GM12878 (cell line): ENCODE measurements at regions of chr3 and their contacts with region 1.

Region 1: GRCh38 chr3:196073188-196073838 is 8.6 kb downstream of the TFRC start:
- DNase-seq: peak; percentile 50
- ATAC-seq: peak; percentile 94
- H3K4me3 ChIP-seq: no peak overlapping the region
- H3K27ac ChIP-seq: no peak overlapping the region
- H3K4me1 ChIP-seq: peaks cover 14% of the 10 kb centered on the region; the same call in 1 of the 2 replicates
- H3K27me3 ChIP-seq: no peaks in the 10 kb centered on the region
- CTCF ChIP-seq: peak; percentile 72 to 81 (median 76)
- EP300 ChIP-seq: no peak
- POLR2A ChIP-seq: no peak
- RAD21 ChIP-seq: peak; percentile 95

Region 2: DNA sequence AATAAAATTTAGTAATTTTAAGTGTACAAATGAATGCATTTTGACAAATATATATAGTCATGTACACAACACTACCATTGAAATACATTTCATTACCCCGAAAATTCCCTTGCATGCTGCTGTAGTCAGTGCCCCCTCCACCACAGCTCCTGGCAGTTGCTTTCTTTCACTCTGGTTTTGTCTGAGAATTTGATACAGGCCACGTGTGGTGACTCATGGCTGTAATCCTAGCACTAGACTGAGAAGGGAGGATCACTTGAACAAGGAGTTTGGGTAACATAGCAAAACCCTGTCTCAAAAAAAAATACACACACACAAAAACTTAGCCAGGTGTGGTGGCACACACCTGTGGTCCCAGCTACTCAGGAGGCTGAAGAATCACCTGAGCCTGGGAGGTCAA is 56.8 kb before region 1 on chr3:
- CTCF ChIA-PET with region 1: interaction called, 25 read pairs
- POLR2A ChIA-PET with region 1: no interaction called
- RAD21 ChIA-PET with region 1: interaction called, 8 read pairs
- SMC1A ChIA-PET with region 1: interaction called, 5 read pairs
- in situ Hi-C with region 1: no loop called
- intact Hi-C with region 1: loop called (anchors 5 kb)
- DNase-seq: no peak
- ATAC-seq: no peak
- H3K4me3 ChIP-seq: no peak overlapping the region
- H3K27ac ChIP-seq: no peak overlapping the region
- H3K4me1 ChIP-seq: no peaks in the 10 kb centered on the region
- H3K27me3 ChIP-seq: no peaks in the 10 kb centered on the region
- CTCF ChIP-seq: no peak
- EP300 ChIP-seq: no peak
- POLR2A ChIP-seq: no peak
- RAD21 ChIP-seq: no peak

Region 3: GRCh38 chr3:196055683-196056270 is 17.5 kb before region 1 on chr3:
- CTCF ChIA-PET with region 1: interaction called, 31 read pairs
- POLR2A ChIA-PET with region 1: interaction called, 12 read pairs
- RAD21 ChIA-PET with region 1: no interaction called
- SMC1A ChIA-PET with region 1: interaction called, 18 read pairs
- in situ Hi-C with region 1: no loop called
- intact Hi-C with region 1: no loop called
- DNase-seq: no peak
- ATAC-seq: no peak; the same call in 1 of the 3 replicates
- H3K4me3 ChIP-seq: no peak overlapping the region
- H3K27ac ChIP-seq: no peak overlapping the region
- H3K4me1 ChIP-seq: no peaks in the 10 kb centered on the region
- H3K27me3 ChIP-seq: no peaks in the 10 kb centered on the region
- CTCF ChIP-seq: no peak
- EP300 ChIP-seq: no peak
- POLR2A ChIP-seq: no peak
- RAD21 ChIP-seq: no peak

Region 4: DNA sequence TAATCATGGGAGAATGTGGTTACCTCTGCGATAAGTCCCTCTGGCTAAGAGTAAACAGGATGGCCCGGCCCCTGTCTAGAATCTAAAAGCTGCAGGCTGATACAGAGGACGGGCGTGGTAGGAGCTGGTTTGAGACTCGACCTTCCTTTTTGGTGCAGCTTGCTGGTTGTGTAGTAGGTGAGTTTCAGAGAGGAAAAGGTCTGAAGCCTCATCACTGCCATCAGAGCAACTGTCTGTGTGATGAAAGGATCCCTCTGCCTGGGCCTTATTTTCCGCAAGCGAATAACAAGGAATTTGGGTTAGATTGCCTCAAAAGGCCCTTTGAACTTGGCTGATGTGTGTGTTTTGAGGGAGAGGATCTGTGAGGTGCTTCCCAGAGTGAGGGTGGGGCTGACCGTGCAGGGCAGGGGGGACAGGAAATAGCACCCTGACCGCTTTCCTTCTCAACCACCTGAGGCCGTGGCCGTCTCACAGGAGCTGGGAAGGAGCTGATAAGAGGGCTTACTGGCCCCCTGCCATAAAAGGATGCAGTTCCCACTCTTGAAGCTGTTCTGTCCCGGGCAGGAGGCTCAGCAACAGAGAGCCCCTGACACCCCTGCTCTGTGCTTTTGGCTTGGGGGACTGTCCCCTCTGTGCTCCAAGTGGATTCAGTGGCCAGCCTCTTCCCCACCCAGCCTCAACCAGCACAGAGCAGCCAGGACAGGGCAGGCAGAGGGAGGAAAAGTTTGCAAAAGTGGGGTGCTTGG is 54.2 kb after region 1 on chr3:
- CTCF ChIA-PET with region 1: interaction called, 8 read pairs
- POLR2A ChIA-PET with region 1: no interaction called
- RAD21 ChIA-PET with region 1: interaction called, 15 read pairs
- SMC1A ChIA-PET with region 1: interaction called, 11 read pairs
- in situ Hi-C with region 1: no loop called
- intact Hi-C with region 1: no loop called
- DNase-seq: no peak
- ATAC-seq: peak; percentile 80
- H3K4me3 ChIP-seq: no peak overlapping the region
- H3K27ac ChIP-seq: peak overlapping the region; percentile 27
- H3K4me1 ChIP-seq: peaks cover 25% of the 10 kb centered on the region
- H3K27me3 ChIP-seq: no peaks in the 10 kb centered on the region
- CTCF ChIP-seq: no peak
- EP300 ChIP-seq: no peak
- POLR2A ChIP-seq: no peak
- RAD21 ChIP-seq: no peak

Region 5: DNA sequence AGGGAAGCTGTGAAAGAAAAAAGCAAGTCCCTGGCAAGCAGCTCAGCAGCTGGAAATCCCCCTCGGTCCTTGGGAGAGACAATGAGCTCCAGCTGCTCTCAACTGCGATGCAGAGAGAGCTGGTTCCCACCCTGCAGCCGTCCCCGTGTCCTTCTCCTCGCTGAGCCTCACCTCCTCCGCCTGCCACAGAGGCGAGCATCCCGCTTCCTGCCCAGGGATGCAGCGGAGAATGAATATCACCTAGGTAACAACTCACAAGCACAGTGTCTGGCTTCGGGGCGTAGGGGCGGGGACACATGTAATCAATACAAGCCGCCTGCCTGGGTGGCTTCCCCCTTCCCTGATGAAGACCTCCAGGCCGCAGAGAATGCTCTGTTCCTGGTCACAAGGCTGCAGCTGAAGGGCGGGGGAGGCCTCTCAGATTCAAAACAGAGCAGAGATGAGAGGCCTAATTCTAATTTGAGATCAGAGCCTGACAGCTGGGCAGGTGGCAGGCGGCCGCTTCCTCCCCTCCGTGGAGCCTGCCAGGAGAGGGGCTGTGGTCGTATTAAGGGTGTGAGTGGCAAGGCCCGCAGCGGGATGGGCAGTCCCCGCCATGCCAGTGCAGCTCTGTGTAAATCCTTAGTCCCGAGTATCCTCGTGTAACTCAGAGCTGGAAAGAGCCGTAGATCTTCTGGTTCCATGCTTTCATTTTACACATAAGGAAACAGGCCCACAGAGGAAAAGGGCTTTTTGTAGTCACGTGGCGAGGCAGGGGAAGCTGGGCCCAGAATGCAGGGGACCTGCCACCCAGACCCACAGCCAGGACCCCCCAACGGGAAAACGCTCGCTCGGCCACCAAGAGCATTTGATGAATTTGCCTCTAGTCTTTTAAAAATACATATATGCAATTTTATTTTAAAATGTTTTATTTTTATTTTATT is 113.6 kb after region 1 on chr3:
- CTCF ChIA-PET with region 1: interaction called, 121 read pairs
- POLR2A ChIA-PET with region 1: interaction called, 34 read pairs
- RAD21 ChIA-PET with region 1: interaction called, 113 read pairs
- SMC1A ChIA-PET with region 1: interaction called, 155 read pairs
- in situ Hi-C with region 1: loop called (anchors 5 kb)
- intact Hi-C with region 1: loop called (anchors 1 kb)
- DNase-seq: peak; percentile 64
- ATAC-seq: peak; percentile 67
- H3K4me3 ChIP-seq: peak overlapping the region; percentile 66; the same call in 1 of the 2 replicates
- H3K27ac ChIP-seq: peak overlapping the region; percentile 95
- H3K4me1 ChIP-seq: peaks cover 70% of the 10 kb centered on the region
- H3K27me3 ChIP-seq: no peaks in the 10 kb centered on the region
- CTCF ChIP-seq: no peak
- EP300 ChIP-seq: no peak; a peak in 2 of 4 replicates
- POLR2A ChIP-seq: peak; percentile 74
- RAD21 ChIP-seq: no peak

Region 6: GRCh38 chr3:196227629-196228493 is 154.5 kb after region 1 on chr3:
- CTCF ChIA-PET with region 1: no interaction called
- POLR2A ChIA-PET with region 1: no interaction called
- RAD21 ChIA-PET with region 1: no interaction called
- SMC1A ChIA-PET with region 1: no interaction called
- in situ Hi-C with region 1: no loop called
- intact Hi-C with region 1: no loop called
- DNase-seq: no peak
- ATAC-seq: 0 out of 3 replicates have a peak, but pooled peaks have one; percentile 12
- H3K4me3 ChIP-seq: no peak overlapping the region
- H3K27ac ChIP-seq: no peak overlapping the region
- H3K4me1 ChIP-seq: peaks cover 10% of the 10 kb centered on the region
- H3K27me3 ChIP-seq: no peaks in the 10 kb centered on the region
- CTCF ChIP-seq: no peak
- EP300 ChIP-seq: no peak
- POLR2A ChIP-seq: no peak
- RAD21 ChIP-seq: no peak